ENCODE measurements at regions of chr10 and their contacts with region 1.

Region 1: DNA sequence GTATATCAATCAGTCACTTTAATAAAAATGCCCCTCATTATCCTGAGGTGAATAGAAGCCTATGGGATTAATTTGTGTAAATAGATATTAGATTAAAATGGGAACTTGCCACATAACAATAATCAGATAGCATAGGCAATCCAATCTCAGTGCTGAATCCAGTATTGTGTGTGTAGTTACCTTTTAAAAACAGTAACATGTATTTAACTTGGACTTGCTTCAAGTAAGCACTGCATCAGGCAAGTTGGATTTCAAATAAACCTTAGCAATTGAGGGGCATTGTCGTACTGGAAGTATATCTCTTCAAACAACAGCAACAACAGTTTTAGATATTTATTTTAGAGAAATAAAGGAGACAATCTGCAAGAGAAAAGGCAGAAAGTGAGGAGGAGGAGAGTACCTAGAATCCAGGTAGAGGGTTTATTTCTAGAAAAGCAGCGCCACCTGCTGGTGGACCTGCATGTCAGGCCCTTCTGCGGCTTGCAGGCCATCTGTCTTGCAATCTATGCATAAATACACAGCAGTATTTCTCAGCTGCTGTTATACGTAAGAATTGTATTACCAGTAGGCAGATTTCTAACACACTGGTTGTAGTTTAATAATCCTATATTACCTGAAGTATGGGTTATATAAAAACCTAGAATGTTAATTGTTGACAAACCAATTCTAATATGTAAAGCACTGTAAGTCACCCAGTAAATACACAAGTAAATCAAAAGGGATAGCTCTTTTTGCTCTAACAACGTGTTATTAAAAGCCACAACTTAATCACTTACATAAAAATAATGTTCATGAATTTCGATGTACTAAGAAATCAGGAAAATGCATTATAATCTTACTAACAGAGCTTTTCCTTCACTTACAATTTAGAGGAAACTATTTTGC is 652.8 kb downstream of the KCNMA1 start:
- DNase-seq: peak; percentile 76
- H3K4me3 Mint-ChIP-seq: no peak overlapping the region
- H3K27ac Mint-ChIP-seq: no peak overlapping the region
- H3K4me1 Mint-ChIP-seq: no peaks in the 10 kb centered on the region
- H3K27me3 Mint-ChIP-seq: no peaks in the 10 kb centered on the region
- CTCF ChIP-seq: peak; percentile 93

Region 2: DNA sequence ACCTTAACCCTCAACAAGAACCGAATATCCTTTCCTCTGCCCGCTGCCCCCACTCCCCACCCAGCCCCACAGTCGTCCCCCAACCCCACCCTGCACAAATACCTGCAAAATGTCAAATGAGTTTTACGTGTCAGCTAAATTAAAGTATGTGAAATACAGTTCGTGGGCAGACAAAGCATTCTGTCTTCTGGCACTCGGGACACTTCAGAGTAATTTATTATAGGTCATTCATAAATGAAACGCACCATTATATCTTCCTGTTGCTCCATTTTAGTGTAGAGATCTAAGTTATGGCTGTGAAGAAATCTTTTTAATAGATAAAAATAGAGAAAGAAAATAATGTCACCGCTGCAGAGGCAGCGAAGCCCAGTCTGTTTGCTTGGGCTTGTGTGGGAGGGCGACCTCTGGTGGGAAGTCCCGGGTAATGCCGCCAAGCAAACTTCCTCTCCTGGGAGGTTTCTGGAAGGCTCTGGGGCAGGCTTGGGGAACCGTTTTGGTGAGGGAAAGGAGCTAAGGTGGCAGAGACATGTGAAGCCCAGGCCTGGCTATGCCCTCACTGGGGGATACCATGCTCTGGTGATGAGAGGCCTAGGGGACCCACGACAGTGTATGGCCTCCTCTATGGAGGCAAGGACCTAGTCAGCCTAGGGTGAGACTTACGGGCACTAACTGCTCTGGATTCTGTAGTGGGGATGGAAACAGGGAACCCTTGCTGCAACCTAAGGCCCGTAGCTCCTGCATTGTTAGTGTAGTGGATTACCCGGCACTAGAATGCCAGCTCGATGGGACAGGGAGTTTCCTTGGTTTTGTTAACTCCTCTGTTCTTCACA is 948.5 kb before region 1 on chr10:
- CTCF ChIA-PET with region 1: interaction called, 5 read pairs
- POLR2A ChIA-PET with region 1: no interaction called
- intact Hi-C with region 1: loop called (anchors 5 kb)
- DNase-seq: peak; percentile 63
- H3K4me3 Mint-ChIP-seq: no peak overlapping the region
- H3K27ac Mint-ChIP-seq: no peak overlapping the region
- H3K4me1 Mint-ChIP-seq: peaks cover 6% of the 10 kb centered on the region
- H3K27me3 Mint-ChIP-seq: no peaks in the 10 kb centered on the region
- CTCF ChIP-seq: peak; percentile 94

Region 3: GRCh38 chr10:76106611-76107010 is 878.2 kb before region 1 on chr10:
- CTCF ChIA-PET with region 1: no interaction called
- POLR2A ChIA-PET with region 1: no interaction called
- intact Hi-C with region 1: loop called (anchors 10 kb)
- DNase-seq: no peak
- H3K4me3 Mint-ChIP-seq: no peak overlapping the region
- H3K27ac Mint-ChIP-seq: no peak overlapping the region
- H3K4me1 Mint-ChIP-seq: peaks cover 17% of the 10 kb centered on the region
- H3K27me3 Mint-ChIP-seq: no peaks in the 10 kb centered on the region
- CTCF ChIP-seq: no peak

Region 4: DNA sequence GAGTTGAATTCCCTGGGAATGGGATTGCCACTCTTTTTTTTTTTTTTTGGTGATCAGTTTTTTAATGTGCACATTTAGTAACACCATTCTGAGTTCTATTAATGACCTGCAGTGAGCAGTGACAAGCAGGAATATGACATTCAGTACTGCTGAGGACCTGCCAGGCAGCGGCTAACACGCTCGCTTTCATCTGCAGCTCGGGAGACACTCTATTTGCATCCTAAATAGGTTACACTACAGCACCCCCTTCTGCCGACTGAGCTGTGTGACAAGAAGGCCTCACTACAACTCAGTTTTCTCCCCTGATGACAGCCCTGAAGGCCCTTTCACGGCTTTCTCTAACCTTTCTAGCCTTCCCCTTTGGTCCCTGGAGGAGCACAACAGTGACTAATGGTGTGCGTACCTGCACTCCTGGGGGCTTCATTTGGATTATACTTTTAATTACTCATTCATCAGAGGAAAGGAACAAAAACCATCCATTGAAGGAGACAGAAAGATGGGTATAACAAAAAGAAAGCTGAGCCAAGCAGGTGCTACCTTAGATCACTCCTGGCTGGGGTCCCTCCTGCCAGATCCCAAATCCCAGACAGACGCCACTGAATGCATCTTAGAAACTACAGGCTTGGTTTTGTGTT is 681.0 kb before region 1 on chr10:
- CTCF ChIA-PET with region 1: no interaction called
- POLR2A ChIA-PET with region 1: no interaction called
- intact Hi-C with region 1: loop called (anchors 10 kb)
- DNase-seq: peak; percentile 73
- H3K4me3 Mint-ChIP-seq: no peak overlapping the region
- H3K27ac Mint-ChIP-seq: no peak overlapping the region
- H3K4me1 Mint-ChIP-seq: no peaks in the 10 kb centered on the region
- H3K27me3 Mint-ChIP-seq: no peaks in the 10 kb centered on the region
- CTCF ChIP-seq: peak; percentile 46

Region 5: DNA sequence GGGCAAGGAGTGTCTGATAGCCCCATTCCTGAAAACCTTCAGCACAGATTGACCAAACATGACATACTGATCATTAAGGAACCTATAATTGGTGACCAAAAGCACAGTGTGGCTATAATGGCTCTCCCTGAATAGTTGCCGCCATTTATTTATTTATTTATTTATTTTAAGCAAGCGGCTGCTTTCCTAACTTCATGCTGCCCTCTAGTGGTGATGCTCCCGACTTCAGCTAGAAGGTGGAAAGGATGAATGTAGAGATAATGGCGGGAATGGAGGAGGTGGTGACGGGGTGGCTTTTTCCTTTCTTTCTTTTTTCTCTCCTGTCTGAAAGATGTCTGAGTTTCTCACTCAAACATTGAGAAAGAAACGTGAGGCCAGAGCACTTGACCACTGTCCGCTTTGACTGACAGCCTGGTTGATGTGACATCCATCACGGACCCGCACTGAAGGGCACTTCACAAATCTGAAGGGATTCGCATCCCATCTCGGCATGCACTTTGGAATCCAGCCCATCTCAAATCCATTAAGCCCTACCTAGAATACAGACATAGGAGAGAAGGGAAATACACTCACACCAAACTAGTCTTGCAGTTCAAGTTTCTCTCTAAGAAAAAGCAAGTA is 437.3 kb before region 1 on chr10:
- CTCF ChIA-PET with region 1: interaction called, 6 read pairs
- POLR2A ChIA-PET with region 1: interaction called, 3 read pairs
- intact Hi-C with region 1: loop called (anchors 1 kb)
- DNase-seq: peak; percentile 84
- H3K4me3 Mint-ChIP-seq: no peak overlapping the region
- H3K27ac Mint-ChIP-seq: no peak overlapping the region
- H3K4me1 Mint-ChIP-seq: no peaks in the 10 kb centered on the region
- H3K27me3 Mint-ChIP-seq: no peaks in the 10 kb centered on the region
- CTCF ChIP-seq: peak; percentile 74

Region 6: DNA sequence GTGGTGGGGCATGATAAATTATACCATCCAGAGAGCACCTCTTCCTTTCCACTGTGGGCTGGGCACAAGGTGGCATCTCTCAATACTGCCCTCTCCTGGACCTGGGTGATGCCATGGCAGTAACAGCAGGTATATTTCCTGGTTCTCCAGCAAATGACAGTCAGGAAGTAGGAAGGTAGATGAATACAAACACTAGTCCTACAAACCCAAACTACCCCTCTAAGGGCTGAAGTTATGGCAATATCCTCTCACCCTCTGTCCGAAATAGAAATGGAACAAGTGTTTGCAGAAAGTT is 352.1 kb before region 1 on chr10:
- CTCF ChIA-PET with region 1: interaction called, 11 read pairs
- POLR2A ChIA-PET with region 1: no interaction called
- intact Hi-C with region 1: loop called (anchors 10 kb)
- DNase-seq: peak; percentile 56
- H3K4me3 Mint-ChIP-seq: no peak overlapping the region
- H3K27ac Mint-ChIP-seq: no peak overlapping the region
- H3K4me1 Mint-ChIP-seq: no peaks in the 10 kb centered on the region
- H3K27me3 Mint-ChIP-seq: no peaks in the 10 kb centered on the region
- CTCF ChIP-seq: peak; percentile 22

Region 7: GRCh38 chr10:77111611-77112550 is 127.1 kb after region 1 on chr10:
- CTCF ChIA-PET with region 1: interaction called, 3 read pairs
- POLR2A ChIA-PET with region 1: no interaction called
- intact Hi-C with region 1: loop called (anchors 1 kb)
- DNase-seq: peak; percentile 72
- H3K4me3 Mint-ChIP-seq: no peak overlapping the region
- H3K27ac Mint-ChIP-seq: no peak overlapping the region
- H3K4me1 Mint-ChIP-seq: peaks cover 10% of the 10 kb centered on the region
- H3K27me3 Mint-ChIP-seq: no peaks in the 10 kb centered on the region
- CTCF ChIP-seq: peak; percentile 78

Measured in MCF 10A (cell line).